PC-3 (cell line): ENCODE measurements at regions of chr11 and their contacts with region 1.

Region 1: GRCh38 chr11:108654994-108655631 is 9.8 kb upstream of the DDX10 start:
- DNase-seq: peak; percentile 86
- ATAC-seq: peak; percentile 90
- H3K4me3 ChIP-seq: no peak overlapping the region
- H3K27ac ChIP-seq: no peak overlapping the region
- H3K4me1 ChIP-seq: no peaks in the 10 kb centered on the region
- H3K27me3 ChIP-seq: no peaks in the 10 kb centered on the region
- CTCF ChIP-seq: peak; percentile 97

Region 2: DNA sequence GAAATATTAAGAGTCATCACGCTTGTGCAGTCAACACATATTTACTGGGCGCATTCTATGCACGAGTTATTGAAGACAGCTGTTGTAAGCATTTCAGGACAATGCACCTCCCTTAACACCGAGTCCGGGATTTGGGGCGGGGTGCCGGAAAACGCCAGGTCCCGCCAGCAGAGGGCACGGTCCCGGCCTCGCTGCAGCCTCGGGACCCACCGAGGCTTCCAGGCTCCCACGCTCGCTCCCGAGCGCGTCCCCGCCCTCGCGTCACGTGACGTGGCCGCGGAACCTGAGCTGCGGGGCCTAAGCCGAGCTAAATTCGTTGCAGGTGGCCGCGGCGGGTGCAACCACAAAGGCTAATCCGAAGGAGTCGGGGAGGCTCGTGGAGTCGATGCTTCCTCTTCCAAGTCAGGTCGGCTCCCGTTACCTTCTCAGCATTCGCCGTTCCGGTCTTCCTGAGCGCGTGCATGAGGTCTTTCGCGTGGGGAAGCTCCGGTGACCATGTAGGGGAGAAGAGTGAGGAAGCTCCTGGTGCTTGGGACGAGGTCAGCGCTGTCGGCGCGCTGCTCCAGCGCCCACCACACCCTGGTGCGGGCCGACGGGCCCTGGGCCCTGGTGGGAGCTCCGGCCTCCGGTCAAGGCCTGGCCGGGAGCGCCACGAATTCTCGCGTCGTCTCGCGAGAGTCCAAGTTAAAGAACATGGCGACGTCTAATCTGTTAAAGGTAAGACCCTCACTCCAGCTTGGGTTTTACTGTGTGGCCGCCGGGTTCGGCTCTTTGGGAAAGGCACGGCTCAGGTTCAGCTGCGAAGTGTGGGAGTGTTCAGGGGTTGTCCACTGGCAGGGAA is 646.2 kb before region 1 on chr11 and contains the start of gene CUL5:
- CTCF ChIA-PET with region 1: no interaction called
- POLR2A ChIA-PET with region 1: no interaction called
- intact Hi-C with region 1: loop called (anchors 10 kb)
- DNase-seq: peak; percentile 96
- ATAC-seq: peak; percentile 84
- H3K4me3 ChIP-seq: peak within 1 kb of the TSS; percentile 93
- H3K27ac ChIP-seq: peak within 1 kb of the TSS; percentile 82
- H3K4me1 ChIP-seq: peaks cover 23% of the 10 kb centered on the region; the same call in 1 of the 2 replicates
- H3K27me3 ChIP-seq: no peaks in the 10 kb centered on the region
- CTCF ChIP-seq: peak; percentile 91
- total RNA-seq, gene CUL5: 32.1 and 37.0 TPM in 2 replicates

Region 3: GRCh38 chr11:108135845-108136544 is 519.1 kb before region 1 on chr11:
- CTCF ChIA-PET with region 1: no interaction called
- POLR2A ChIA-PET with region 1: no interaction called
- intact Hi-C with region 1: loop called (anchors 5 kb)
- DNase-seq: peak; percentile 57
- ATAC-seq: peak; percentile 49
- H3K4me3 ChIP-seq: no peak overlapping the region
- H3K27ac ChIP-seq: no peak overlapping the region
- H3K4me1 ChIP-seq: 0 out of 2 replicates have a peak, but pooled peaks cover 3% of the 10 kb centered on the region
- H3K27me3 ChIP-seq: no peaks in the 10 kb centered on the region
- CTCF ChIP-seq: peak; percentile 59

Region 4: DNA sequence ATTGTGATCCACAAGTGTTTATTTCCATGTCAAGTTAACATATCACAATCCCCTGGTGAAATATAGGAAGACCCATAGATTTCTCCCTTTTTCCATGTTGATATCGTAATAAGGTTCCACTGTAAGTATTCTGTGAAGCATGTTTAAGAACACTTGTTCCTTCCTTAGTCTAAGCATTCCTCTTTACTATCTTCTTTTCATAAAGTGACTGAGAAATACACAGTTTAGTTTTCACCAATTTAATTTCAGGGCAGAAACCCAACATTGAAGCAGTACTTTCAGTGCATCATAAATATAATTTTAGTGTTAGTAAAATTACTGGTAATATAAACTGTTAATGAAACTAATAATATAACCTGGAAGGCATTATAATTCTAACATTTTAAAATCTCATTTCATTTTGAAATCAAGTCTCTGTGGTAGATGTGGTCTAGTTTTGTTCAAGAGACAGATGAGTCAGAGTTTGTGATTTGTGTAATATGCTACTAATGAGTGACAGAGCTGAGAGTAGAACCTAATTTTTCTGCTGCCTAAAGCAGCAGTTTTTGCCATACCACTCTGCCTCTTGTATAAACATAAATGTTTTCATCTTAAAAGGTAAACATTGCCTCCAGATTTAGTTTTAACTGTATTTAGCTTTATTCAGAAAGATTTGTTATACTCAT is 352.9 kb before region 1 on chr11:
- CTCF ChIA-PET with region 1: no interaction called
- POLR2A ChIA-PET with region 1: no interaction called
- intact Hi-C with region 1: loop called (anchors 10 kb)
- DNase-seq: peak; percentile 44
- ATAC-seq: peak; percentile 51
- H3K4me3 ChIP-seq: no peak overlapping the region
- H3K27ac ChIP-seq: no peak overlapping the region
- H3K4me1 ChIP-seq: no peaks in the 10 kb centered on the region
- H3K27me3 ChIP-seq: no peaks in the 10 kb centered on the region
- CTCF ChIP-seq: no peak

Region 5: GRCh38 chr11:108368134-108368533 is 287.0 kb before region 1 on chr11:
- CTCF ChIA-PET with region 1: no interaction called
- POLR2A ChIA-PET with region 1: no interaction called
- intact Hi-C with region 1: no loop called
- DNase-seq: peak; percentile 64
- ATAC-seq: peak; percentile 41
- H3K4me3 ChIP-seq: no peak overlapping the region
- H3K27ac ChIP-seq: peak overlapping the region; percentile 26
- H3K4me1 ChIP-seq: peaks cover 60% of the 10 kb centered on the region
- H3K27me3 ChIP-seq: no peaks in the 10 kb centered on the region
- CTCF ChIP-seq: no peak

Region 6: GRCh38 chr11:108414958-108415357 is 240.2 kb before region 1 on chr11:
- CTCF ChIA-PET with region 1: no interaction called
- POLR2A ChIA-PET with region 1: no interaction called
- intact Hi-C with region 1: loop called (anchors 1 kb)
- DNase-seq: no peak
- ATAC-seq: no peak
- H3K4me3 ChIP-seq: no peak overlapping the region
- H3K27ac ChIP-seq: no peak overlapping the region
- H3K4me1 ChIP-seq: no peaks in the 10 kb centered on the region
- H3K27me3 ChIP-seq: no peaks in the 10 kb centered on the region
- CTCF ChIP-seq: no peak